GM10248 (cell line): ENCODE measurements at regions of chr20 and their contacts with region 1.

Region 1: GRCh38 chr20:5191829-5192569 is 65.2 kb downstream of the CDS2 start:
- DNase-seq: peak; percentile 81
- CTCF ChIP-seq: peak; percentile 67

Region 2: GRCh38 chr20:4585104-4585753 is 606.8 kb before region 1 on chr20:
- CTCF ChIA-PET with region 1: no interaction called
- POLR2A ChIA-PET with region 1: no interaction called
- DNase-seq: no peak
- CTCF ChIP-seq: no peak

Region 3: DNA sequence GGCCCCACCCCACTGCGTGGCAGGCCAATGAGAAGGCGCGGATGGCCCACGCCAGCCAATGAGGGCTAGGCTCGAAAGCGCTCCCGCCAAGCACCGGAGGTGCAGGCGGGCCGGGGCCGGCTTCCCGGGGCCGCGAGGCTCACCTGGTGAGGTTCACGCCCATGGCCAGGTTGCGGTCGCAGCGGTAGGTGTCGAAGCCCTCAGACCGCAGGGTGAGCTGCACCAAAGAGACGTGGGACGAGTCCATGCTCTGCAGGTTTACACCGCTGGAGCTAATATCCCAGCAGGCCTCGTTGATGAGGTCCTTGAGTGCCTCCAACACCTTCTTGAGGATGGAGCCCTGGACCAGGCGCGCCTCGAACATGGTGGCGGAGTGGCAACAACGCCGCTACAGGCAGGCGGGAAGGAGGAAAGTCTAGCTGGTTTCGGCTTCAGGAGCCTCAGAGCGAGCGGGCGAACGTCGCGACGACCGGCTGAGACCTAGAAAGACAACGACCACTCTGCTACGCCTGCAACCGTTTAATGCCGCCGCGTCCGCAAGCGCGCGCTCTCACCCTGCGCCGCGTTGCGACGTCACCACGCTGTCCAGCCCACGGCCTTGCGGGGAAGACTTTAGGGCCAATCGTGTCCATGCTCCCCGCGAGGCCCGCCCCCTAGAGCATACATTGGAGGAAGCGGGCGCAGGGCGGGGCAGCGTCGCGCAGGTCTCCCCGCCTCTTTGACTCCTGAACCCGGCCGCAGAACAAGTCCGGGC is 72.4 kb before region 1 on chr20 and contains the start of gene PCNA:
- CTCF ChIA-PET with region 1: interaction called, 183 read pairs
- POLR2A ChIA-PET with region 1: interaction called, 7 read pairs
- DNase-seq: peak; percentile 96
- CTCF ChIP-seq: no peak

Region 4: DNA sequence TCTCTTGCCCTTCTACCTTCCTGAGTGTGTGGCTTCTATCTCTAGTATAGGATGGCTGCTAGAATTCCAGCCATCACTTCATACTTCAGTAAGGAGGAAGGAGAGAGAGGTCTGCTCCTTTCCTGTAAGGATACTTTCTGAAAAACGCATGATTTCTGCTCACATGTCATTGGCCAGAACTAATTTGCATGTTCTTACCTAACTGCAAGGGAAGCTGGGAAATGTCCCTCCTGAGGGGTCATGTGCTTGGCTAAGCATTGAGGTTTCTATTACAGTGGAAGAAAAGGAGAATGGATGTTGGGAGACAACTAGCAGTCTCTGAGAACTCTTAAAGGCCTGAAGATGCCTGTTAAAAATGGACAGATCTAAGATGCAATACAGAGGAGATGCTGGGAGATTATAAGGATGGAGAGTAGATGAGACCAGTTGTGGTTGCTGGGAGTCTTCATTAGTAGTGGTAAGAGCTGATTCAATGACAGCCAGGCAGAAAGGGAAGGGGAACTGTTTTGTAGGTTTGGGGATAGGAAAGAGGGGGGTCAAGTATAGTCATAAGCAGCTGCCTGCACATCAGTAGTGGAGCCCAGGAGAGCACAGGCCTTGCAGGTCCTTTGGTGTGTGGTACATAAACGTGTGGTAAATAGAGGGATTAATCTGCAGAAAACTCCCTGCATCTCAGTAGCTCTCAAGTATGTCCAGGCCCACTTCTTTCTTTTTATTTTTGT is 45.0 kb before region 1 on chr20:
- CTCF ChIA-PET with region 1: interaction called, 18 read pairs
- POLR2A ChIA-PET with region 1: interaction called, 3 read pairs
- DNase-seq: no peak
- CTCF ChIP-seq: no peak

Region 5: DNA sequence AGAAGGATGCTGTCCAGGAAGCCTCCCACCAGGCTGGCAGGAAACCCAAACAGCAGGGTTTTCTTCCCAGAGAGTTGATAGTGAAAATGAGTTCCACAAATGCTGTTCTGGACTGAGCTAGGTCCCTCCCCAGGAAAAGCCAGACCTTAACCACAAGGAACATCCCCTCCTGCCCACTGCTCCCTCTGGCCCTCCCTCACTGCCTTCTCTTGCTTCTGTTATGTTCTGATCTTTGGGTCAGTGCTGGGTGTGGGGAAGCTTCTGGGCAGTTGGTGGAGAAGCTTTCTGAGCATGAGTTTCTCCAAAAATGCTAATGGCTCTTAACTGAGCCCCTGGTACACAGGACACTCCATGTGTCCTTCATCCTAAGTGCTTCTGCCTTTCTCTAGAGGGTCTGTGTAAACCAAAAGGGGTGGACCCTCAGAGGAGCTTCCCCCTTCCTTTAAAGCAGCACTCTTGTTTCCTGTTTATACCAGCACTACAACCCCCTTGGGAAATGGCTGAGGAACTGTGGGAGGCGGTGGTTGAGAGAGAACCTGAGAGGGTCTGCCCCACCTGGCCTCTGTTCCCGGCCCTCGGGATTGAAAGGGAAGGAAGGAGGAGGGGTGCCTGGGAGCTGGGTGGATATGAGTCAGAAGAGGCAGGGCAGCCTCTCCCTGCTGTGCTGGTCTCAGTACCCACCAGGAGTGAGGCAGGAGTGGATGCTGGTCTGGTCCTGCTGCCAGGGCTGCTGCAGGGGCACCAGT is 23.2 kb before region 1 on chr20:
- CTCF ChIA-PET with region 1: interaction called, 21 read pairs
- POLR2A ChIA-PET with region 1: no interaction called
- DNase-seq: no peak
- CTCF ChIP-seq: no peak

Region 6: GRCh38 chr20:5205348-5206210 is 13.6 kb after region 1 on chr20:
- CTCF ChIA-PET with region 1: interaction called, 85 read pairs
- POLR2A ChIA-PET with region 1: no interaction called
- DNase-seq: peak; percentile 83
- CTCF ChIP-seq: peak; percentile 94

Region 7: DNA sequence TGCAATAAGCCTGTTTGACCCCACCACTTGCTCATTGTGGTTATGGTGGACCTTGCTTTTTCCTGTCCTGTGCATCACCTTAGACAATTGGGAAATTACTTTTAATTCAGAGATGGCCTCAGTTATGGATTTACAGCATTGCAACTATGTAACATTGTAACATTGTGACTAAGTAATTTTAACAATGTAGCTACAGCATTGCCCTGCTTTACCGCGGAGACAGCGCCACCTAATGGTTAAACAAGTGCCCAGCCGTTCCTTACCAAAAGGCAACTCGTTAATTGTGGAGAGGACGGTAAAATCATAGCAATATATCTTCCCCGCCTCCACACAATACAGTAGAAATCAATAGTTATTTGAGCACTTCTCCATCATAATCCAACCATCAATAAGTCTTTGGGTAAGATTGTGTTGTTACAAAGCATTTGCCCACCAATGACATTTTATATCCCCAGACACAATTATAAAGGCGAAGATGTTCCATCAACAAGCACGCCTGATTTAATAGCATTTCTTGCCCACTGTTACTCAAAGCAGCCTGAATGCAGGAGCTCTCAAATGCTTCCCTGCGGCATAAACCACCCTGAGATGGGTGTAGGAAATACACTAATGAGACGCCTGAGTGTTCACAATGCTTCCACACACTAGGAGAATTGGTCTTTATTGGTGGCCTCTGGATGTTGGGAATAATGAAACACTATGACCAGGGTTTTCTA is 31.1 kb after region 1 on chr20:
- CTCF ChIA-PET with region 1: interaction called, 22 read pairs
- POLR2A ChIA-PET with region 1: no interaction called
- DNase-seq: peak; percentile 72
- CTCF ChIP-seq: peak; percentile 95

Region 8: DNA sequence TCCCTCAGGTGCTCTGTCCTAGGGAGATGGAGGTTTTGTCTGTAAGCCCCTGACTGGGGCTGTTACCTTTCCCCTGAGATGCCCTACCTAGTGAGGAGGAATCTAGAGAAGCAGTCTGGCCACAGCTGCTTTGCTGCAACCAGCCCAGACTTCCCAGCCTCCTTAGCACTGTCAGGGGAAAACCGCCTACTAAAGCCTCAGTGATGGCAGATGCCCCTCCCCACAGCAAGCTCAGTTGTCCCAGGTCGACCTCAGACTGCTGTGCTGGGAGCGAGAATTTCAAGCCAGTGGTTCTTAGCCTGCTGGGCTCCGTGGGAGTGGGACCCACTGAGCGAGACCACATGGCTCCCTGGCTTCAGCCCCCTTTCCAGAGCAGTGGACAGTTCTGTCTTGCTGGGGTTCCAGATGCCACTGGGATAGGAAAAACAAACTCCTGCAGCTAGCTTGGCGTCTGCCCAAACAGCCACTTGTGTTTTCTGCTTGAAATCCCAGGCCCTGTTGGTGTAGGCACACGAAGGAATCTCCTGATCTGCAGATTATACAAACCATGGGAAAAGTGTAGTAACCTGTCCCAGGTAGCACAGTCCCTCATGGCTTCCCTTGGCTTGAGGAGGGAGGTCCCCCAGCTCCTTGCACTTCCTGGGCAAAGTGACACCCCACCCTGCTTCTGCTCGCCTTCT is 271.1 kb after region 1 on chr20:
- CTCF ChIA-PET with region 1: no interaction called
- POLR2A ChIA-PET with region 1: no interaction called
- DNase-seq: no peak
- CTCF ChIP-seq: no peak